ENCODE measurements at regions of chr1 and their contacts with region 1.

Region 1: GRCh38 chr1:244801246-244801645 is 34.2 kb upstream of the COX20 start:
- H3K4me3 ChIP-seq: no peak overlapping the region
- H3K27ac ChIP-seq: no peak overlapping the region
- H3K4me1 ChIP-seq: no peaks in the 10 kb centered on the region
- CTCF ChIP-seq: no peak

Region 2: GRCh38 chr1:244576259-244576892 is 224.9 kb before region 1 on chr1:
- CTCF ChIA-PET with region 1: no interaction called
- POLR2A ChIA-PET with region 1: no interaction called
- H3K4me3 ChIP-seq: no peak overlapping the region
- H3K27ac ChIP-seq: no peak overlapping the region
- H3K4me1 ChIP-seq: no peaks in the 10 kb centered on the region
- CTCF ChIP-seq: no peak

Region 3: DNA sequence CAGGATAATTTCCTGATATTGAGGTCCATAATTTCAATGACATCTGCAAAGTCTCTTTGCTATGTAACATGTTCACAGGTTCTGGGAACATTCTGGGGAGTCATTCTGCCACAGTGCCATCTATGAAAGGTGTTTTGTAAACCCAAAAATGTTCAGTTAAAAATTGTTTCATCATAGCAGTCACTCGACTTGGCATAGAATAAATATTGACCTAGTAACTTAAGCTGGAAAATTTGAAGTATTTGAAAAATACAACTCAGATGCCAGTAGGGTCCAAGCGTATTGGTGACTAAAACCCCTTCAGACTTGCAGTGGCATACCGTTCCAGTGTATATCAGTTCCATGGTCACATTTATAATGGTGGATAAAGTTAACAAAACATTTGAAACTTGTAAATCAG is 141.6 kb before region 1 on chr1:
- CTCF ChIA-PET with region 1: interaction called, 13 read pairs
- POLR2A ChIA-PET with region 1: no interaction called
- H3K4me3 ChIP-seq: no peak overlapping the region
- H3K27ac ChIP-seq: no peak overlapping the region
- H3K4me1 ChIP-seq: peaks cover 22% of the 10 kb centered on the region; the same call in 1 of the 2 replicates
- CTCF ChIP-seq: no peak

Region 4: GRCh38 chr1:244727871-244728474 is 73.3 kb before region 1 on chr1:
- CTCF ChIA-PET with region 1: no interaction called
- POLR2A ChIA-PET with region 1: no interaction called
- H3K4me3 ChIP-seq: no peak overlapping the region
- H3K27ac ChIP-seq: no peak overlapping the region
- H3K4me1 ChIP-seq: no peaks in the 10 kb centered on the region
- CTCF ChIP-seq: no peak

Region 5: GRCh38 chr1:244782056-244782455 is 19.2 kb before region 1 on chr1:
- CTCF ChIA-PET with region 1: interaction called, 14 read pairs
- POLR2A ChIA-PET with region 1: interaction called, 4 read pairs
- H3K4me3 ChIP-seq: no peak overlapping the region
- H3K27ac ChIP-seq: no peak overlapping the region
- H3K4me1 ChIP-seq: peaks cover 9% of the 10 kb centered on the region
- CTCF ChIP-seq: no peak

Region 6: DNA sequence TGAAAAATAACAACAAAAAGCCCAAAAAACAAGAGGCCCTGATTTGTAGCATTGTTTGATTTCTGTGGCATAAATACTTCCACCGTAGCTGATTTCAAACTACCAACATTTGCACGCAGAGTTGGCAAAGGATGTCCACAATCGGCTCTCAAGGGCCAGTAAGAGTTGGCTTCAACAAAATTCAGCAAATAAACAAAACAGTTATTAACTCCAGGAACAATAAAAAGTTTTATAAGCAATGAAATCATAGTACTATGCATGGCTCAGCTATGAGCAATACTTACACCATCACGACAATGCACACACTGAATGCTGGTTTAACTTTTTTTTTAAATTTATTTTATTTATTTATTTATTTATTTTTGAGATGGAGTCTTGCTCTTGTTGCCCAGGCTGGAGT is 25.5 kb after region 1 on chr1:
- CTCF ChIA-PET with region 1: interaction called, 10 read pairs
- POLR2A ChIA-PET with region 1: no interaction called
- H3K4me3 ChIP-seq: no peak overlapping the region
- H3K27ac ChIP-seq: no peak overlapping the region
- H3K4me1 ChIP-seq: no peaks in the 10 kb centered on the region
- CTCF ChIP-seq: no peak

Measured in HEK293 (cell line).